ENCODE measurements at regions of chrX and their contacts with region 1.

Region 1: DNA sequence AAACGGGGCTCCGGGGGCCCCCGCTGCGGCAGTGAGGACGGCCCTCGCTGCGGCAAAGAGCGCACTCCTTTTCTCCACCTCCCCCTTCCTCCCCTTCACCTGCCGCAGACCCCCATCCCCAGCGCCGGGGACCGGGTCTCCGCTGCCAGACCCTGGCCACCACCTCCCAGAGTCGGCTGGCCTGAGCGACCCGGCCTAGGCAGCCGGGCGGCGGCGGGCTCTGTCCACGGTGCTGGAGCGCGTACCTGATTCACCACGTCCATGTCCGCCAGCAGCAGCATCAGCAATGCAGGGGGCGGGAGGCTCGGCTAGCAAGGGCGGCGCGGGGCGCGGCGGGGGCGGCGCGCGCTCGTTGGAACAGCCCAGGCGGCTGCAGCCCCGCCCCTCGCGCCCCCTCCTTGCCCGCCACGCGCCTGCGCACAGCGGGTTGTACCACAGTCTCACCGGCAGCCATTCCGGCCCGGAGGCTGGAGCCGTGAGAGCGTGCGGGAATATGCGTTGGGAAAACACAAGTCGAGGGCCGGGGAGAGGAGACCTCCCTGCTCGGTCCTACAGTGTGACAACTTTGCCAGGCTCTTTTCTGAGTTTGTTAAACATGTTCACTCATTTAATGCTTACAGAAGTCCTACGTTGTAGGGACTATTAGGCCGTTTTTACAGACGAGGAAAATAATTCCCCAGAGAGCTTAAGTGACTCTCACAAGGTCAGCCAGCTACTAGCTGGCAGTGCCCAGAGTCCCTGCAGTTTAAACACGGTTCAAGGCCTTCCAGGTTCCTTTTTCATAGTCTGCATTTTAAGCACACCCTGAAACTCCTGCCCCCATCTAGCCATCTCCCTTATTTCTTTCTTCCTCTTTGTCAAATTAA is at the start of gene SYP:
- DNase-seq: peak; percentile 71 to 92 (median 88)
- ATAC-seq: peak; percentile 99
- H3K4me3 ChIP-seq: peak within 1 kb of the TSS; percentile 39 to 50
- H3K4me3 Mint-ChIP-seq: peak within 1 kb of the TSS; percentile 72
- H3K27ac ChIP-seq: peak within 1 kb of the TSS; percentile 53 to 54
- H3K27ac Mint-ChIP-seq: peak within 1 kb of the TSS; percentile 82
- H3K4me1 ChIP-seq: no peaks in the 10 kb centered on the region
- H3K4me1 Mint-ChIP-seq: peaks cover 14% of the 10 kb centered on the region
- H3K27me3 ChIP-seq: no peaks in the 10 kb centered on the region
- H3K27me3 Mint-ChIP-seq: no peaks in the 10 kb centered on the region
- CTCF ChIP-seq: no peak
- total RNA-seq, gene SYP: 0.44 to 0.65 TPM

Region 2: GRCh38 chrX:48676106-48676892 is 523.8 kb before region 1 on chrX:
- CTCF ChIA-PET with region 1: no interaction called
- POLR2A ChIA-PET with region 1: no interaction called
- intact Hi-C with region 1: no loop called
- DNase-seq: peak; percentile 73 to 93 (median 83)
- ATAC-seq: peak; percentile 94
- H3K4me3 ChIP-seq: peak overlapping the region; percentile 74 to 76
- H3K4me3 Mint-ChIP-seq: peak overlapping the region; percentile 92
- H3K27ac ChIP-seq: peak overlapping the region; percentile 78 to 86
- H3K27ac Mint-ChIP-seq: peak overlapping the region; percentile 93
- H3K4me1 ChIP-seq: peaks cover 6% of the 10 kb centered on the region
- H3K4me1 Mint-ChIP-seq: peaks cover 30% of the 10 kb centered on the region
- H3K27me3 ChIP-seq: no peaks in the 10 kb centered on the region
- H3K27me3 Mint-ChIP-seq: no peaks in the 10 kb centered on the region
- CTCF ChIP-seq: no peak

Region 3: DNA sequence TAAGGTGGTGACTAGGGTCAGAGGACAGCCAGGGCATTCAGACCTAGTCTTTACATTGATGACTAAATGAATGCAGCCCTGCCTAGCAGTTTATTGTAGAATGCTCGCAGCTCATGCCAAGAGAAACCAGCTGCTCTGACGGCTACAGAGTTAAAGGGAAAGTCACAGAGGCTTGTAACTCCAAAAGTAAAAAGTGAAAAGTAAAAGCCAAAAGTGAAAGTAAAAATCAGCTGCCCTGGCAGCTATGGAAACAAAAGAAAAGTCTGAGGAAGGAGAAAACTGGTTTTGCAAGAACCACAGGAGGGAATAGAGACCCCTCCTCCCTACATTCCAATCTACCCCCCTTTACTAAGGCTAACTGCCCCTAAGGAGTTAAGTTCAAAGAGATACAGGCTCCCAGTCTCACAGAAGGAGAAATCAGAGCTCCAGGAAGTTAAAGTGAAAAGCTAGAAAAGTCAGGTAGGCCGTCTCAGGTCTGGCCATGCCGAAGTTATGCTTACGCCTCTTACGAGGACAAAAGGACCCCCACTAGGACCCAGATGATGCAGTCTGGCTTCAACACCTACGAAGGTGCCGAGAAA is 109.4 kb after region 1 on chrX:
- CTCF ChIA-PET with region 1: no interaction called
- POLR2A ChIA-PET with region 1: no interaction called
- intact Hi-C with region 1: loop called in 1 of 2 experiments (anchors 1 kb)
- DNase-seq: peak in 7 of 9 experiments; percentile 1 to 64 (median 35)
- ATAC-seq: peak; percentile 74
- H3K4me3 ChIP-seq: peak overlapping the region; percentile 36 to 54
- H3K4me3 Mint-ChIP-seq: peak overlapping the region; percentile 86
- H3K27ac ChIP-seq: peak overlapping the region; percentile 64 to 78
- H3K27ac Mint-ChIP-seq: peak overlapping the region; percentile 97
- H3K4me1 ChIP-seq: peaks cover 18% of the 10 kb centered on the region
- H3K4me1 Mint-ChIP-seq: peaks cover 21% of the 10 kb centered on the region
- H3K27me3 ChIP-seq: no peaks in the 10 kb centered on the region
- H3K27me3 Mint-ChIP-seq: no peaks in the 10 kb centered on the region
- CTCF ChIP-seq: no peak

Measured in CD8-positive, alpha-beta T cell (primary cell).